Gastrocnemius medialis (tissue), 4 donors: ENCODE measurements at regions of chr11 and their contacts with region 1.

Region 1: GRCh38 chr11:34585735-34586487 is 35.0 kb upstream of the EHF start:
- DNase-seq: no peak
- ATAC-seq: peak in 1 of 2 donors; percentile 49
- H3K4me3 ChIP-seq: peak overlapping the region in 1 of 4 donors; percentile 20
- H3K27ac ChIP-seq: no peak overlapping the region
- H3K4me1 ChIP-seq: no peaks in the 10 kb centered on the region
- H3K27me3 ChIP-seq: no peaks in the 10 kb centered on the region
- CTCF ChIP-seq: peak; percentile 56 to 75 (median 73)
- POLR2A ChIP-seq: no peak

Region 2: DNA sequence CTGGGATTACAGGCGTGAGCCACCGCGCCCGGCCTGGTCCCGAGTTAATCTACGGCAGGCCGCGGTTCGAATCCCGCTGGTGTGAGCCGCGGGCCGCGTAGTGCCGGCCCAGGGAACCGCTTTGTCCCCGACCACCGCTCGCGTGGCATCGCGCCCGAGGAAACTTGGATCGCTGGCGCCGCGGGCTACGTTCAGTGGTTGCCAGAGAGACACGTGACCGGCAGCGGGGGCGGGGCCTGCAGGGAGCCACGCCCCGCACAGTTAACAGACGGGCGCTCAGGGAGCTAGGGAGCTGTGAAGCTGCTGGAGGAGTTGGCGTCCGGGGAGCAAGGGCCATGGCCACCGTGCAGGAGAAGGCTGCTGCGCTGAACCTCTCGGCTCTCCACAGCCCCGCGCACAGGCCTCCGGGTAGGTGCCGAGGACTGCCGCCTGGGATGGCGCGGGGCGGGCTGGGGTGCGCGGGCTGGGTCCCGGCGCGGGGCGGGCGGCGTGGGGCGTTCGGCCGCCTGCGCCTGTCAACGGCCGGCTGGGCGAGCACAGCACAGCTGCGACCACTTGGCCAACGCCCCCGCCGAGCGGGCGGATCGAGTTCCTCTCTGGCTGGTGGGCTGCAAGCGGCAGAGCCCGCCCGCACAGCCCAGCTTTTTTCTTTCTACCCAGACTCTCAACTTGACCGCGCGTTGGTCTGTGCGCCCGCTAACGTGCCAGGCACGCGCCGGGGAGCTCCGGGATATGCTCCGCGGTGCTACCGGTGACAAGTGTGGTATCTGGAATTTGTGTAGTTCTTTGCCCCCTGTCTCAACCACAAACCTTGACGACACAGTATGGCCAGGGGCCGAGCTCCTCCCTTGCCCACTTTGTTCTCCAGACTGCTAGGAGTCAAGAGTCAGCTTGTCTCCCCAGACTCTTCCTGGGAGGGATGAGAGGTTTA is 1570.0 kb before region 1 on chr11 and contains the start of gene DEPDC7:
- in situ Hi-C with region 1: no loop called
- intact Hi-C with region 1: no loop called
- DNase-seq: peak; percentile 74 to 88
- ATAC-seq: peak; percentile 94 to 97
- H3K4me3 ChIP-seq: peak within 1 kb of the TSS; percentile 65 to 89 (median 69)
- H3K27ac ChIP-seq: peak within 1 kb of the TSS; percentile 76 to 86 (median 84)
- H3K4me1 ChIP-seq: peaks cover 26% of the 10 kb centered on the region in 2 donors
- H3K27me3 ChIP-seq: no peaks in the 10 kb centered on the region
- CTCF ChIP-seq: no peak
- POLR2A ChIP-seq: peak; percentile 45 to 74
- total RNA-seq, gene DEPDC7: 2.0 to 5.8 (median 2.8) TPM

Region 3: GRCh38 chr11:34653826-34654490 is 68.0 kb after region 1 on chr11:
- in situ Hi-C with region 1: no loop called
- intact Hi-C with region 1: loop called (anchors 10 kb)
- DNase-seq: peak; percentile 51 to 74
- ATAC-seq: peak; percentile 21 to 65
- H3K4me3 ChIP-seq: no peak overlapping the region
- H3K27ac ChIP-seq: peak overlapping the region; percentile 67 to 89 (median 82)
- H3K4me1 ChIP-seq: peaks cover 7 to 24% of the 10 kb centered on the region in 2 donors
- H3K27me3 ChIP-seq: no peaks in the 10 kb centered on the region
- CTCF ChIP-seq: no peak
- POLR2A ChIP-seq: no peak

Region 4: DNA sequence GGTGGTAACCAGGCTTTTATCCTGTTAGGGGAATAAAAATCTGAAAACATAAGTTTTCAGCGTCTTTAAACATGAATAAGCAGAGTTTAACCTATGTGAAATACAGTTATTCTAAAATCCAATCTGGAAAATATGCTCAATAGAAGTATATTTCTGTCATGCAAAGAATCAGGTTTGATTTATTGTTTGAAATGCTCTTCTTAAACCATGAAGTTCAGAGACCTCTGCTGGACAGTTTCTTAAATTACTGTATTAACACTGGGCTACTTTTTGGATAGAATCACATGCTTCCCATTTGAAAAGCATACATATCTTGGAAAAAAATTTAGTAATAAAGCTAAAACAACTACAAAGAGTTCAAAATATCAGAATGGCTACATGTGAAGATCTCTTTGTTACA is 304.9 kb after region 1 on chr11:
- in situ Hi-C with region 1: loop called (anchors 5 kb)
- intact Hi-C with region 1: loop called (anchors 1 kb)
- DNase-seq: no peak
- ATAC-seq: peak in 1 of 2 donors; percentile 36
- H3K4me3 ChIP-seq: no peak overlapping the region
- H3K27ac ChIP-seq: no peak overlapping the region
- H3K4me1 ChIP-seq: peaks cover 0 to 9% of the 10 kb centered on the region in 2 donors
- H3K27me3 ChIP-seq: no peaks in the 10 kb centered on the region
- CTCF ChIP-seq: peak; percentile 40 to 59 (median 42)
- POLR2A ChIP-seq: no peak

Region 5: GRCh38 chr11:35237860-35238715 is 652.2 kb after region 1 on chr11:
- in situ Hi-C with region 1: loop called in 1 of 4 experiments (anchors 25 kb)
- intact Hi-C with region 1: no loop called
- DNase-seq: peak; percentile 16 to 33
- ATAC-seq: peak in 1 of 2 donors; percentile 58
- H3K4me3 ChIP-seq: no peak overlapping the region
- H3K27ac ChIP-seq: no peak overlapping the region
- H3K4me1 ChIP-seq: peaks cover 0 to 3% of the 10 kb centered on the region in 2 donors
- H3K27me3 ChIP-seq: no peaks in the 10 kb centered on the region
- CTCF ChIP-seq: peak; percentile 61 to 84 (median 77)
- POLR2A ChIP-seq: no peak

Region 6: GRCh38 chr11:35404388-35404775 is 818.5 kb after region 1 on chr11:
- in situ Hi-C with region 1: loop called in 3 of 4 experiments (anchors 25 kb)
- intact Hi-C with region 1: no loop called
- DNase-seq: no peak
- ATAC-seq: no peak
- H3K4me3 ChIP-seq: no peak overlapping the region
- H3K27ac ChIP-seq: no peak overlapping the region
- H3K4me1 ChIP-seq: no peaks in the 10 kb centered on the region
- H3K27me3 ChIP-seq: no peaks in the 10 kb centered on the region
- CTCF ChIP-seq: peak in 1 of 5 experiments; percentile 24
- POLR2A ChIP-seq: no peak